Cardiac septum (tissue), 1 donor: ENCODE measurements at regions of chr5 and their contacts with region 1.

Region 1: GRCh38 chr5:159605585-159605984 is 275.3 kb upstream of the IL12B start:
- DNase-seq: no peak

Region 2: DNA sequence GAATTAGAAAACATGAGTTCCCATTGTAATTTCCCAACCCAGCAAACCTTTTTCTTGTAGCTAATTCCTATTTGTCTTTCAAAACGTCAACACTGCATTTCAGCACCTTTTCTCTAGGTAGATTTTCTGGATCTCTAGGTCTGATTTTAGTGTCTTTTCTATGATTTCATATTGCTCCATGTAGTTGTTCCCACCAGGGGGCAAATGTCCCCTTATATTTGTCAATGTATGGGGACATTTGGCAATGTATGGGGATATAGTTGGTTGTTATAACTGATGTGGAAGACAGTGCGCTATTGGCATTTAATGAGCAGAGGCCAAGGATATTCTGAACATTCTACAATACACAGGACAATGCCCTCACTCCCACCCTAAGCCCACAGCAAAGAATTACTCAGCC is 36.8 kb after region 1 on chr5:
- intact Hi-C with region 1: loop called (anchors 5 kb)
- DNase-seq: no peak

Region 3: GRCh38 chr5:159764283-159765134 is 158.9 kb after region 1 on chr5:
- intact Hi-C with region 1: loop called (anchors 5 kb)
- DNase-seq: no peak